CD14-positive monocyte (primary cell): ENCODE measurements at regions of chr6 and their contacts with region 1.

Region 1: DNA sequence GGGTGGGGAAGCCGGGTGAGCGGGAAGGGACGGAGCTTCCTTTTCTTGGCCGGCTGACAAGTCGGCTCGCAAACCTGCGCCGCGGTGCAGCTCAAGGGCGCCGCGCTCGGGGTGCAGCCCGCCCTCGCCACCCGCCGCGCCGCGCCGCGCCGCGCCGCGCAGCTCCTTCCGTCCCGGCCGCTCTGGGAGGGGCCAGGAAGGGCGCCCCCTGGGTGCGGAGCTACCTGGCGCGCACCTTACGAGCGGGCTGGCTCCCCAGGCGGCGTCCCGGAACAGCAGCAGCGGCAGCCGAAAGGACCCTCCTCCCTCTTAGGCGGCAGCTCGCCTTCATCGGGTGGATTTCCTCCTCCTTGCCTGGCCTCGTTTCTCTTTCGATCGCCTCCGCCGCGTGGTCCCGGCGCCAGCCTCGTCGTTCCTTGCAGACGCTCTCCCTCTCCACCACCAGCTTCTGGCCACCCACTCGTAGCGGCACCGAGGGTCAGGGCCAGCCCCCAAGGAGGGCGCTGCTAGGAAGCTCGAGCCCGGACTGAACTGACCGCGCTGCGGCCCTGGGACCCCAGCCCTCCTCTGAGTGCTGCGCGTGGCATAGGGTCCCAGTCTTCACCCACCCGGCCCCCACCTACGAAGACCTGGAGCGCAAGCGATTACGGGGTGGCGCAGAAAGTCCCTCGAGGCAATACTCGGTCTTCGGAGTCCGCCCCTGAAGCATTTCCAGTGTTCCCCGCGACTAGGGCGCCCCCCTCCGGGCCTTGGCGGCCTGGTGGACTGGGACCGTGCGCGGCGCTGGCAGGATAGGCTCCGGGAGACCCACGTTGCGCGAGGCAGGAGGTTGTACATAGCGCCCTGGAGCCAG is at the start of gene MAP3K5:
- DNase-seq: peak; percentile 83 to 86 (median 85)
- H3K4me3 ChIP-seq: peak within 1 kb of the TSS; percentile 41 to 97 (median 91)
- H3K4me3 Mint-ChIP-seq: peak within 1 kb of the TSS; percentile 97 to 99
- H3K27ac ChIP-seq: peak within 1 kb of the TSS; percentile 94 to 98
- H3K27ac Mint-ChIP-seq: peak within 1 kb of the TSS; percentile 92 to 97 (median 96)
- H3K4me1 ChIP-seq: peaks cover 37 to 45% of the 10 kb centered on the region in 2 donors
- H3K4me1 Mint-ChIP-seq: peaks cover 44% of the 10 kb centered on the region
- H3K27me3 ChIP-seq: no peaks in the 10 kb centered on the region
- H3K27me3 Mint-ChIP-seq: peaks cover 0 to 2% (median 0%) of the 10 kb centered on the region in 3 donors
- CTCF ChIP-seq: peak; percentile 87
- polyA plus RNA-seq, gene MAP3K5: 9.6 to 12.0 (median 11.1) TPM

Region 2: DNA sequence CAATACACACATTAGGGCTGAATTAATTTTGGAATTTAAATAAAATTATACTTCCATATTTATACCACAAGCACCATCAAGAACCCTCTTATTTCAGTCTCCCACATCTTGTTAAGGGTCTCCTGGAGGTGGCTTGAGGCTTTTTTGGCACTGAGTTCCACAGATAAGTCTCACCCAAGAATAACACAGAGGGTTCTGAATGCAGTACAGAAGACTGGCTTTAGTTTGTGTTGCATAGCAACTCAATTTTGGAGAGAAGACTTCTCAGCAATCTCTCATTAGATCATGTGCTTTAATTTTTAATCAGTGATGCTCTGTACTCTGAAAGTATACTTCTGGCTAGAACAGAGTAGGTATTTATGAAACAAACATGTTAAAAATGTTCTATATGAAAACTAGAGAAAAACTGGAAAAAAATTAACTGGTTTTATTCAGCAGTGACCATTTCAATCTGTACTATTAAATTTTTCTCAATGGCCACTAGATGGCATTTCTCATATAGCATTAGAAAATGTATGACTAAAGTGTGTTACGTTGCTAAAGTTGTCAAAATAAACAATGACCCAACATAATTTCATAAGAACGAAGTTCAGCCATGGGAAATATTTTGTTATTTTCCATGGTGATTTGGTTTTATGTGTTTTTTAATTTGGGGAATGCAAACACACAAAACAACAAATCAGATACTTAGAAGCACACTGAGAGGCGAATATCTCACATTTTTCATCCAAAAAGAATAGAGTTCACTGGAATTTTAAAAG is 209.7 kb before region 1 on chr6:
- intact Hi-C with region 1: loop called in 1 of 2 experiments (anchors 10 kb)
- DNase-seq: peak; percentile 67 to 88 (median 81)
- H3K4me3 ChIP-seq: no peak overlapping the region
- H3K4me3 Mint-ChIP-seq: no peak overlapping the region
- H3K27ac ChIP-seq: peak overlapping the region; percentile 65 to 90
- H3K27ac Mint-ChIP-seq: peak overlapping the region; percentile 91 to 97 (median 94)
- H3K4me1 ChIP-seq: peaks cover 0 to 3% of the 10 kb centered on the region in 2 donors
- H3K4me1 Mint-ChIP-seq: peaks cover 2% of the 10 kb centered on the region
- H3K27me3 ChIP-seq: no peaks in the 10 kb centered on the region
- H3K27me3 Mint-ChIP-seq: no peaks in the 10 kb centered on the region
- CTCF ChIP-seq: peak; percentile 78

Region 3: DNA sequence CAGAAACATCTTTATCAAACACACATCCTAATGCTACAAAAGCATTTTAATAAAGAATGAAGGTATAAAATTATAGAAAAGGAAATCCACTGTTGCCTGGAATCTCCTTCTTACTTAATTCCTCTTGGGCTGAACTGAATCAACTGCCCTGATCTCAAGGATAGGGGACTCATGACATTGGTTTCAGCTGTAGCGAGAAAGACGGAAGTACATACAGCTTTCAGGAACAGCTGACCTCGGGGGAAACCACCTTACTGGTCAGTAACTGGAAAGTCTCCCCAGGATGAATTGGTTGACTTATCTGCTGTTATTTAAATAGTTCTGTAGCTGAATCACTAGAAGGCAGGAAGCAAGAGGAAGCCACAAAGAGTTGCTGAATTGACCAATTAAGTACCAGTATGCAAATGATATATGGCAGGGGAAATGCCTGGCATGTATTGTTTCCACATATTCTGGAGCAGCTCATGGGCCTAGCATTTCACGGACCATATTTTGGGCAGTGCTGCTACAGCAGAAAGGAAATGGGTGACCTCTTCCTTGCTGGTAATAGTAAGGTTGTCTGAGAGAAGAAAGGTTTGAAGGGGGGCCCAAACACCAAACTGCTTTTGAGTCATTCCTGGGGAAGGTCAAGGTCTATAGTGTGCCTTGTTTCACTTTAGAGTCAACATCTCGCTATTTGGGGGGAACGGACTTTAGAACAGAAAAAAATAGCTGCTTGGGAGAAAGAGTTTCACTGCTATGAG is 198.7 kb before region 1 on chr6:
- intact Hi-C with region 1: loop called (anchors 5 to 10 kb)
- DNase-seq: peak; percentile 94 to 100 (median 99)
- H3K4me3 ChIP-seq: peak overlapping the region in 1 of 3 experiments; percentile 45
- H3K4me3 Mint-ChIP-seq: peak overlapping the region; percentile 3 to 72
- H3K27ac ChIP-seq: peak overlapping the region; percentile 39 to 87
- H3K27ac Mint-ChIP-seq: peak overlapping the region; percentile 90 to 96 (median 94)
- H3K4me1 ChIP-seq: peaks cover 23 to 26% of the 10 kb centered on the region in 2 donors
- H3K4me1 Mint-ChIP-seq: peaks cover 24% of the 10 kb centered on the region
- H3K27me3 ChIP-seq: no peaks in the 10 kb centered on the region
- H3K27me3 Mint-ChIP-seq: peaks cover 0 to 1% (median 0%) of the 10 kb centered on the region in 3 donors
- CTCF ChIP-seq: no peak

Region 4: GRCh38 chr6:136643850-136644596 is 148.6 kb before region 1 on chr6:
- intact Hi-C with region 1: loop called (anchors 2 to 5 kb)
- DNase-seq: peak; percentile 50 to 70 (median 65)
- H3K4me3 ChIP-seq: no peak overlapping the region
- H3K4me3 Mint-ChIP-seq: no peak overlapping the region
- H3K27ac ChIP-seq: peak overlapping the region in 1 of 2 donors; percentile 16
- H3K27ac Mint-ChIP-seq: peak overlapping the region in 1 of 7 donors; percentile 71
- H3K4me1 ChIP-seq: no peaks in the 10 kb centered on the region
- H3K4me1 Mint-ChIP-seq: no peaks in the 10 kb centered on the region
- H3K27me3 ChIP-seq: no peaks in the 10 kb centered on the region
- H3K27me3 Mint-ChIP-seq: no peaks in the 10 kb centered on the region
- CTCF ChIP-seq: peak; percentile 95

Region 5: DNA sequence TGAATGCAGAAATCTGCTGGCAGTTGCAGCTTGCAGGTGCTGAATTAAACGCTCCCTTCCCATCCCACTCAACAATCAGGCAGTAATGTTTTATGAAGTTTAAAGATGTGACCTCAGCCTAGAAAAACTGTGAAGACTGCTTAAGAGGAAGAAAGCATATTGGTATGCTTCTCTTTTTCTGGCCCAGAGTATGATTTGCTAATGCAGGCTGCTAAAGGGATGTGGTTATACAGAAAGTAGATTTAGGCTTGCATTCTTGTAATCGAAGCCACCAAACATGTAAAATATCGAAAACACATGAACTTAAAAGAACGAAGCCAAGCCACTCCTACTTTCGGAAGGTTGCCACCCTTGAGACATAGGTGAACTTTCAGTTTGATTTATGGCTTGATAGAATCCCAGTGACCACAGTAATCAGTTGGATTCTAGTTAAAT is 41.1 kb before region 1 on chr6:
- intact Hi-C with region 1: loop called (anchors 5 kb)
- DNase-seq: peak; percentile 38 to 65 (median 42)
- H3K4me3 ChIP-seq: peak overlapping the region in 2 of 3 experiments; percentile 31 to 48
- H3K4me3 Mint-ChIP-seq: peak overlapping the region in 1 of 2 donors; percentile 75
- H3K27ac ChIP-seq: peak overlapping the region; percentile 45 to 82
- H3K27ac Mint-ChIP-seq: peak overlapping the region; percentile 77 to 95 (median 86)
- H3K4me1 ChIP-seq: peaks cover 53 to 55% of the 10 kb centered on the region in 2 donors
- H3K4me1 Mint-ChIP-seq: peaks cover 69% of the 10 kb centered on the region
- H3K27me3 ChIP-seq: no peaks in the 10 kb centered on the region
- H3K27me3 Mint-ChIP-seq: peaks cover 0 to 2% (median 1%) of the 10 kb centered on the region in 3 donors
- CTCF ChIP-seq: no peak